Mammary epithelial cell (primary cell): ENCODE measurements at regions of chr19 and their contacts with region 1.

Region 1: DNA sequence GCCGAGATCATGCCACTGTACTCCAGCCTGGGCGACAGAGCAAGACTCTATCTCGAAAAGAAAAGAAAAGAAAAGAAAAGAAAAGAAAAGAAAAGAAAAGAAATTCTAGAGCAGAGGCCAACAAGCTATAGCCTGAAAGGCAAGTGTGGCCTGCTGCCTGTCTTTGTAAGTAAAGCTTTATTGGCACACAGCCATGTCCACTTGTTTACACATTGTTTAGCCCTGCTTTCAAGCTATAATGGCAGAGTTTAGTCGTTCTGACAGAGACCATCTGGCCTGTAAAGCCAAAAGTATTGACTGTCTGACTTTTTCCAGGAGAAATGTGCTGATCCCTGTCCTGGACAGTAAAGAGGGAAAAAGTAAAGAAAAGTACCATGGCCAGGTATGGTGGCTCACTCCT is 18.3 kb downstream of the NWD1 start:
- DNase-seq: no peak
- H3K4me3 ChIP-seq: no peak overlapping the region
- H3K27ac ChIP-seq: no peak overlapping the region
- H3K4me1 ChIP-seq: peaks cover 5% of the 10 kb centered on the region
- H3K27me3 ChIP-seq: no peaks in the 10 kb centered on the region
- CTCF ChIP-seq: no peak

Region 2: DNA sequence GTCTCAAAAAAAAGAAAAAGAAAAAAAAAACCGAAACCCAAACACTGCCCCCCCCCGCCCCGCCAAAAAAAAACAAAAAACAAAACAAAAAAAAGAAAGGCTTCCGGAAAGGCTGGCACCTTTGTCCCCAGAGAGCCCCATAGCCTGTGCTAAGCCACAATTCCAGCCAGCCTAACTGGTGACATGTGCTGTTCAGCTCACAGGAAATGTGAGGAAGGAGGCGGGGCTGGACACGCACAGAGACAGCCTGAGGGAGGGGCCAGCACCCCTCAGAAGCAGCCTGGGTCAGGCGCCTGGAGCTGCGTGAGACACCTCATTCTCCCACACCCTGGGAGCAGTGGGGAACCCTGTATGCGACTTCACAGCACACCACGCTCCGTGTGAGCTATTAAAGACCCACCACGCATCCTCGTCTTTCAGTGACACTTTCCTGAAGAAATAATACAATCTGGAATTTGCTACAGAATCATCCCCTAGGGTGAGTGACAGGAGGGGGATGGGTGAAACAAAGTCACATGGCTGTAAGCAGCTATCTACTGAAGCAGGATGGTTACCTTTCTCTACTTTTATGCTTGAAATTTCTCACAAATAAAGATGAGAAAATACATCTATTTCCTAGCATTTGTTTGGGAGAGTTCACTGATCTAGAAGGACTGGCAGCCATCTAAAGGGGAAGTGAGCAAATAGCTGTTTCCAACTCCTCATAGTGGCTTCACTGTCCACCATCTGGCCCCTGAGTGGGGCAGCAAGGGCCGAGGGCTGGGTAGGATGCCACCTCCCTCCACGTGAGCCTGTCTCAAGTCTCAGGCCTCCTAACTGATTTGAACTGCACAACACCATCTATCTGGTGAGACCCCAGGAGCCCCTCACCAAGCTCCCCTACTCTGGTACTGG is 153.4 kb before region 1 on chr19:
- CTCF ChIA-PET with region 1: no interaction called
- dilution Hi-C with region 1: no loop called
- in situ Hi-C with region 1: no loop called
- intact Hi-C with region 1: no loop called
- DNase-seq: peak; percentile 75
- H3K4me3 ChIP-seq: no peak overlapping the region
- H3K27ac ChIP-seq: no peak overlapping the region
- H3K4me1 ChIP-seq: peaks cover 74% of the 10 kb centered on the region
- H3K27me3 ChIP-seq: no peaks in the 10 kb centered on the region
- CTCF ChIP-seq: no peak

Region 3: DNA sequence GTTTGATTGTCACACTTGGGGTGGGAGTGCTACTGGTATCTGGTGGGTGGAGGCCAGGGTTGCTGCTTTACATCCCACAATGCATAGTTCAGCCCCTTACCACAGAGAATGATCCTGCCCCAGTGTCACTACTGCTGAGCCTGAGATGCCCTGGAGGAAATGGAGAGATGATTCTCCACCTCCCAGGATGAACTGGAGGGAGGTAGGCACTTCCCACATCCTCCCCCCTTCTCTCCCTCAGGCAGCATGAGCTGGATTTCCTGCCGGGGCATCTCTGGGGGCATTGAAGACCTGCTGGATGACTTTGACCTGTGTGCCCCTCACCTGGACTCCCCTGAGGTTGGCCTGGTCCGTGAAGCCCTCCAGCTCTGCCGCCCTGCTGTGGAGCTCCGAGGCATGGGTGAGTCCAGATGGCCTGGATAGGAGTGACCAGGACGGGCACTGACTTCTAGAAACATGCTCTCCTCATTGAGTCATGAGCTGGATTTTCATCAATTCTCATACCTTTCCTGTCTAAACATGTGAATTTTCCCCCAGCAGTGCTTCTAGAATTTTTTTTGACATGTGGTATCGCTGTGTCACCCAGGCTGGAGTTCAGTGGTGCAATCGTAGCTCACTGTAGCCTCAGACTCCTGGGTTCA is 27.0 kb after region 1 on chr19:
- CTCF ChIA-PET with region 1: no interaction called
- dilution Hi-C with region 1: no loop called
- in situ Hi-C with region 1: no loop called
- intact Hi-C with region 1: loop called (anchors 1 kb)
- DNase-seq: peak; percentile 95
- H3K4me3 ChIP-seq: peak overlapping the region in 2 of 3 experiments; percentile 34 to 53
- H3K27ac ChIP-seq: peak overlapping the region; percentile 65
- H3K4me1 ChIP-seq: peaks cover 15% of the 10 kb centered on the region
- H3K27me3 ChIP-seq: no peaks in the 10 kb centered on the region
- CTCF ChIP-seq: no peak

Region 4: DNA sequence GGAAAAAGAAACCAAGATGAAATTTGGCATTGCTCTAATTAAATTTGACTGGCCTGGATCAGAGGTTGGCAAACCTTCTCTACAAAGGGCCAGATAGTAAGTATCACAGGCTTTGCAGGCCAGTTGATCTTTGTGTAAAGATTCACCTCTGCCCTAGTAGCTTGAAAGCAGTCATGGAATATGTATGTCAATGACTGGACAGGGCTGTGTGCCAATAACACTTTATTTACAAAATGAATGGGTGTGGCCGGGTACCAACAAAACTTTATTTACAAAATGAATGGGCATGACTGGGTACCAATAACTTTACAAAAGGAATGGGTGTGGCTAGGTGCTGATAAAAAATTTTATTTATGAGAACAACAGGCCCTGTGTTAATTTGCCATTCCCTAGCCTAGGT is 111.3 kb after region 1 on chr19:
- CTCF ChIA-PET with region 1: no interaction called
- dilution Hi-C with region 1: no loop called
- in situ Hi-C with region 1: no loop called
- intact Hi-C with region 1: no loop called
- DNase-seq: no peak
- H3K4me3 ChIP-seq: no peak overlapping the region
- H3K27ac ChIP-seq: no peak overlapping the region
- H3K4me1 ChIP-seq: no peaks in the 10 kb centered on the region
- H3K27me3 ChIP-seq: no peaks in the 10 kb centered on the region
- CTCF ChIP-seq: no peak